Heart right ventricle (tissue), 16 donors: ENCODE measurements at regions of chr2 and their contacts with region 1.

Region 1: DNA sequence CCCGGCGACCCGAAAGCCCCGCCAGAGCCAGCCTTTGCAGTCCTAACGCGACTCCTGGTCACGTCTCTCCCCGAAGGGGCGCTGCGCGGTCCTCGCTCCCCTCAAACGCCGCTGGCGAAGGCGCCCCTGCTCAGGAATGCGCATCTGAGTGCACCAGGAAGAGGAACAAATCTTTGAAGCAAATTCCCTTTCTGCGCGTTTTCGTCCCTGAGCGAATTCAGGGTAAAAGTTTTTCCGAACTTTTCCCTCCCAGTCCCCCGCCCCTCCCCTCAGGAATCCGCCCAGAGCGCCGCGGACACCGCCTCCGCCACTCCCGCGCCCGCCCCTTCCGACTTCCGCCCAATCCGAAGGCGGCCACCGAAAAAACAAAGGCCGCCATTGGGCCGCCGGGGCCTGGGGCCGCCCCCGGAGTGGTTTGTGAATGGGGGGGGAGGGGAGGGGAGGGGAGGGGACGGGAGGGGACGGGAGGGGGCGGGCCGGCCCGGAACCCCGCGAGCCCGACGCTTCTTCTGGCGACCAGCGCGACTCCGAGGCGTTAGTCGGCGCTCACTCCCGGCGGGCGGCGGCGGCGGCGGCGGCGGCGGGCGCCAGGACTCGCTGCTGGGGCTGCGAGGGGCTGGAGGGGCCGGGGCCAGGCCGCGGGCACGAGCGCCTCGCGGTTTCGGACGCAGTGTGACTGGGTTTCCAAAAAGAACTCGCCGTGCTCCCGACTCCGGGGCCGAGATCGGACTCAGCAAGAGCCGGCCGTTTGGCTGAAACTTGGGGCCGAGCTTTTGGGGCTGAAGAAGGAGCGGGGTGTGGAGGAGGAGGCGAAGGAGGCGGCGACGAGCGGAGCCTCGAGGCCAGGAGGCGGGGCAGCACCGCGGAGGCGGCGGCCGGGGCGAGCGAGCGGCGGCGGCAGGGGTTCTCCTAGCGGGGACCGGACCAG is at the start of gene FZD7:
- DNase-seq: peak; percentile 93
- ATAC-seq: peak; percentile 86 to 95 (median 92)
- H3K4me3 ChIP-seq: peak within 1 kb of the TSS; percentile 43 to 87 (median 78)
- H3K27ac ChIP-seq: peak within 1 kb of the TSS; percentile 90 to 98 (median 94)
- H3K4me1 ChIP-seq: peaks cover 13 to 48% (median 32%) of the 10 kb centered on the region in 9 donors
- H3K27me3 ChIP-seq: peaks cover 0 to 73% (median 29%) of the 10 kb centered on the region in 7 donors
- CTCF ChIP-seq: peak in 2 of 9 donors; percentile 32
- total RNA-seq, gene FZD7: 9.4 to 51.1 (median 32.3) TPM

Region 2: DNA sequence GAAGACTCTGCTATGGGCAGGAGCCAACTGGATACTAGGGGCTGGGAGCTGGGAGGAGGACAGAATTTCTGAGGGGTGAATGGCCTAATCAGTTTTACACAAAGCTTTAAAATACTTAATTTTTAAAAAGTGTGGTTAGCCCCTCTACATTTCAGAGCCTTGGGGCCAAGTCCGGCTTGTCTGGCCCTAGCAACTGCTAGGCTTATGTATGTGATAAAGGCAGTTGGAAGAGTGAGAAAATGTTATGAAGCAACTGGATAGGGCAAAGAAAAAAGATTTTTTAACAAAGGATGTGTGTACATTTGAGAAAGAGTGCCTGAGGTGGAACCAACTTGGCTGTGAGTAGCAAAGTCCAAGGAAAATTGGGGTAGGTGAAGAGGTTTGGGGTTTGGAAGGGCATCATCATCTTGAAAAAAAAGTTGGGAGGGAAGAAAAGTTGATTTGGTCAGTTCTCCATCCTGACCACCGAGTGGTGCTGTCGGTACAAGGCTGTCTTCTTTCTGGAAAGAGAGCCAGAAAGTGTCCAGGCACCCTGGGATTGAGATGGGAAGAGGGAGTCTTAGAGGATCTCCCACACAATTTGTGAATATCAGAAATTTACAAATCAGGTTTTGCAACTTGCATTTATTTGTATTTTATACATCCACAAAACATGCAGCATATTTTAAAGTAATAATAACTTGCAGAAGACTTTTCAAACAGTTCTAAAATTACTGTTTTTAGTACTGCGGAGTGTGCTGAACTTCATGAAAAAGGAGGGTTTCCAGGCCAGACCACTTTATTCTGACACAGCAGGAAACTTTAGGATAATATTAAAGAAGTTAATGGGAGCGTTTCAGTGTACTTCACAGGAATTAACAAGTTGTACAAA is 237.7 kb before region 1 on chr2:
- intact Hi-C with region 1: loop called in 1 of 10 experiments (anchors 10 kb)
- DNase-seq: peak in 1 of 2 donors; percentile 4
- ATAC-seq: peak in 5 of 8 donors; percentile 53 to 68 (median 62)
- H3K4me3 ChIP-seq: no peak overlapping the region
- H3K27ac ChIP-seq: no peak overlapping the region
- H3K4me1 ChIP-seq: no peaks in the 10 kb centered on the region
- H3K27me3 ChIP-seq: peaks cover 0 to 7% (median 0%) of the 10 kb centered on the region in 7 donors
- CTCF ChIP-seq: peak; percentile 40 to 73 (median 66)

Region 3: DNA sequence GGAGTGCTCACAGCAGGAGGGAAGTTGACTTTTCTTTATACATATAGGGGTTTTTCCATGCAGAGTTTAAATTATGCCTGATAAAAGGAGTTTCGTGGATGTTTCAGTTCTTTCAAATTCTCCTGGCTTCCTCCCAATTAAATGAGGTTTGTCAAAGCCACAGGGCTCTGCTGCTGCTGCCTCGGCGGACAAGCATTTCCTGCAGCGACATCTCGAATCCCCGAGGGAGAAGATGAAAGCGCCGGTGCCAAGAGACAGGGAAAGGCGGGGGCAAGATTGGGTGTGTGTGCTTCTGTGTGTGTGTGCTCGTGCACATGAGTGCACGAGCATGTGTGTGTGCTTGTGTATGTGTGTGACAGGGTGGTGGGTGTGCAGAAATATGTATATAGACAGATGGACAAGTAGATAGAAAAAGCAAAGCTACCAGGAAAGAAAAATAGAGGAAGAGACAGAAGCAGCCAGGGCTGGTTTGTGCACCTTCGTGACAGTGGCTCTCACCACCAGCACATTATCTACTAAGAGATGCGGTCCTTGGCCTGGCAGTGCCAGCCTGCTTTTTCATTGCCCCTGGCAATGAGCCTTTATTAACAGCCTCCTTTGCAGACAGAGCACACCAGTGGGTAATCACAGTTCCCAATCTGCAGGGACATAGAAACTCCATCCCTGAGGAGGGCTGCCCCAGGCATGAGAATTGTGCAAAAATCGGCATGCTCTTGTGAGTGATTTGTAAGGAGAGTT is 151.1 kb before region 1 on chr2:
- intact Hi-C with region 1: loop called in 4 of 10 experiments (anchors 2 to 10 kb)
- DNase-seq: peak; percentile 29 to 54
- ATAC-seq: peak in 4 of 8 donors; percentile 21 to 52 (median 29)
- H3K4me3 ChIP-seq: no peak overlapping the region
- H3K27ac ChIP-seq: peak overlapping the region in 2 of 10 donors; percentile 81 to 83
- H3K4me1 ChIP-seq: peaks cover 4 to 41% (median 29%) of the 10 kb centered on the region in 9 donors
- H3K27me3 ChIP-seq: peaks cover 0 to 16% (median 4%) of the 10 kb centered on the region in 7 donors
- CTCF ChIP-seq: no peak

Region 4: DNA sequence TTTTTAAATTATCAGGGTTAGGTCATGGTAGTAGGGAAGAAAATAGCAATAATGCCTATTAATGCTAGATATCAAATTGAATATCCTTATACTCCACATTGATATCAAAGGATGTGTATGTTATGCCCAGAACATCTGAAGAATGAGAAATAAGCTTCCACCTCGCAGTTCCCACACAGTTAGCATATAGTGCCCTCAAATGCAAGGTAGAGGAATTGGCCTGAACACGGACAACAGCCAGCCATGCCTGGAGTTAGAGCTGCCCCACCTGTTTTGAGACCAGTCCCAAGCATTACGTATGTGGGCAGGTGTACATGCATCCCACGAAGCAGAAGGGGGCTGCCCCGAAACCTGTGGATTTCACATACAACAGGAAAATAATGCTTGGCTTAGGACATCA is 125.2 kb after region 1 on chr2:
- intact Hi-C with region 1: loop called in 2 of 10 experiments (anchors 5 kb)
- DNase-seq: no peak
- ATAC-seq: peak in 5 of 8 donors; percentile 15 to 62 (median 47)
- H3K4me3 ChIP-seq: no peak overlapping the region
- H3K27ac ChIP-seq: no peak overlapping the region
- H3K4me1 ChIP-seq: peaks cover 0 to 14% (median 0%) of the 10 kb centered on the region in 9 donors
- H3K27me3 ChIP-seq: no peaks in the 10 kb centered on the region
- CTCF ChIP-seq: peak in 7 of 9 donors; percentile 27 to 51 (median 40)